Right ventricle myocardium inferior (tissue), 1 donor: ENCODE measurements at regions of chr16 and their contacts with region 1.

Region 1: GRCh38 chr16:68022704-68023522 is at the starts of genes DDX28 and DUS2:
- DNase-seq: peak; percentile 98
- ATAC-seq: peak; percentile 98
- total RNA-seq, gene DDX28: 7.5 TPM
- total RNA-seq, gene DUS2: 7.0 TPM

Region 2: GRCh38 chr16:67892899-67893742 is 129.8 kb before region 1 on chr16 and contains the start of gene PSKH1:
- intact Hi-C with region 1: loop called (anchors 2 kb)
- DNase-seq: peak; percentile 98
- ATAC-seq: peak; percentile 98
- total RNA-seq, gene PSKH1: 18.1 TPM

Region 3: DNA sequence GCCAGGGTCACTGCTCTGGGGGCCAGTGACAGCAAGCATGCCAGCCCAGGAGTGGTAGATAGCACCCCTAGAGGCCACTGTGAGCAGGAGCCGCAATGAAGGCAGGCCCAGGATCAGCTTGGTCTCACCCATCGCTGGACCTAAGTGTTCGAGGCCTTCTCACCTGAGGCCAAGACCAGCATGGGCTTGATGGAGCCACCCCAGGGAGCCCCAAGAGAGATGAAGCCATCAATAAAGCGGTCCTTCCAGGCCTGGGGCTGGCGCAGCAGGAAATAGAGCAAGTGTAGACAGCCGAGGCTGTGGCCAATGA is 80.8 kb before region 1 on chr16:
- intact Hi-C with region 1: loop called (anchors 5 kb)
- DNase-seq: no peak
- ATAC-seq: no peak

Region 4: DNA sequence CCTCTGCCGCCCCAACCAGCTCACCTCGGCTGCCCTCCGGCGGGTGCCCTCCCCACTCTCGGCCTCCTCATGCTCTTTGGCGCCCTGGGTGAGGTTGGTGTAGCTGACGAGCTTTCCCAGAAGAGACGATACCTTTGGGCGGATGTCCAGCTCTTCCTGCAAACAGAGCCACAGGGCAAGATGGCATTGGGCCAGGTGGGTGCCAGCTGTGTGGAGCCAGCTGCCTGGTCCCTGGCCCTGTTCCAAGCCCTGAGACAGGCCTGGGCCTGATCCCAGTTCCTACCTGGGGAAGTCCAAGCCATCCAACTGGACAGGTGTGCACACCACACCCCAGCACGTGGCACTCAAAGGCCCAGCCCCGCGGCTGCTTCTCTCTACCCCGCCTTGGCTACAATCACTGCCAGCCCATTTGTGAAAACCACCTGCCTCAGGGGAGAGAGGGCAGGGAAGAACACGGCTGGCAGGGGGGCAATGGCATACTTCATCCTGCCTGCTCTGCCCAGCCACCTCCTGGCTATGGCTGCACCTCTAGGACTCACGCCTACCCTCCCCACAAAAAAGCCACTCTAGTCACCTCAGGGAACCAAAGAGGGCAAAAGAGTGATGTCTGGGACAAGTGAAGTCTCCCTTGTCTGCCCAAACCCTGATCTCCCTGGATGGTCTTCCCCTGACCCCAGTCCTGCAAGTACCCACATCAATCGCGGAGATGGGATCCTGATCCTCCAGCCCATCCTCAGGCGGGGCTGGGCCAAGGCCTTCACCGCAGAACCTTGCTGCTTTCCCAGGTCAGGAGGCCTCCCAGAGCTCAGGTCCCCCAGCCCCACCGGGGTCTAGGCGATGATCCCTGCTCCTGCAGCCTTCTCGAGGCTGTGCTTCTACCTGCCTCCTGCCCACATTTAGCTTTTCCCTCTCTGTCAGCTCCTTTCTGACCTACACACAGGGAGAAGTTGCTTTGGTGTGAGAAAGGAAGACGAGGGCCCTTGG is 61.1 kb before region 1 on chr16:
- intact Hi-C with region 1: loop called (anchors 2 kb)
- DNase-seq: no peak
- ATAC-seq: no peak

Region 5: GRCh38 chr16:68851601-68852000 is 828.7 kb after region 1 on chr16:
- intact Hi-C with region 1: no loop called
- DNase-seq: no peak
- ATAC-seq: no peak